T-cell (primary cell): ENCODE measurements at regions of chr7 and their contacts with region 1.

Region 1: GRCh38 chr7:144011458-144012230 is 11.5 kb downstream of the OR6B1 start:
- DNase-seq: no peak
- ATAC-seq: no peak
- H3K4me3 ChIP-seq: no peak overlapping the region
- H3K4me3 Mint-ChIP-seq: no peak overlapping the region
- H3K27ac ChIP-seq: no peak overlapping the region
- H3K27ac Mint-ChIP-seq: no peak overlapping the region
- H3K4me1 ChIP-seq: no peaks in the 10 kb centered on the region
- H3K4me1 Mint-ChIP-seq: no peaks in the 10 kb centered on the region
- H3K27me3 ChIP-seq: peaks cover 0 to 2% of the 10 kb centered on the region in 2 experiments
- H3K27me3 Mint-ChIP-seq: peaks cover 13 to 35% of the 10 kb centered on the region in 2 donors

Region 2: DNA sequence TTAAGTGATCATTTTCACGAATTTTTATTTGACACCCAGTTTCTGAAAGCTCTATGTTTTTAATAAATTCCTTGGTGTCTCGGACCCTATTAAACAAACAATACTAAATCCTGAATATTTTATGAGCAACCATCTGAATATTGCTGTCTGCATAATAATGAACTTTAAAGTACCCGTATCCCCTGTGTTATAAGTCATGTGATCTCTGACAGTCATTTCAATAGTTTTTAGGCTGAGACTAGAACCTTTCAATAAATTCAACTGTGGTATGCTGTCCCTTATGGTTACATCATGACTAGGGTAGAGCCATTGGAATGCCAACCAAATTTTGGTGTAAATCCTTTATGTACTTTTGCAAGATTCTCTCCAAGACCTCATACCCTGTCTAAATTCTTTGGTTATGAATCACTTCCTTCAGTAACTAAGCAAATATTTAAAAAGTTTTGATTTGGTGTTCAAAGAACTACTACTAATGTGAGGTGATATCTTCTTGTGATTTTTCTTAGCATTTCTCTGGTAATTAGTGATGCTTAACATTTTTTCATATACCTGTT is 32.4 kb before region 1 on chr7:
- CTCF ChIA-PET with region 1: no interaction called
- POLR2A ChIA-PET with region 1: no interaction called
- DNase-seq: no peak
- ATAC-seq: no peak
- H3K4me3 ChIP-seq: no peak overlapping the region
- H3K4me3 Mint-ChIP-seq: no peak overlapping the region
- H3K27ac ChIP-seq: no peak overlapping the region
- H3K27ac Mint-ChIP-seq: no peak overlapping the region
- H3K4me1 ChIP-seq: no peaks in the 10 kb centered on the region
- H3K4me1 Mint-ChIP-seq: no peaks in the 10 kb centered on the region
- H3K27me3 ChIP-seq: no peaks in the 10 kb centered on the region
- H3K27me3 Mint-ChIP-seq: peaks cover 5 to 9% of the 10 kb centered on the region in 2 donors

Region 3: DNA sequence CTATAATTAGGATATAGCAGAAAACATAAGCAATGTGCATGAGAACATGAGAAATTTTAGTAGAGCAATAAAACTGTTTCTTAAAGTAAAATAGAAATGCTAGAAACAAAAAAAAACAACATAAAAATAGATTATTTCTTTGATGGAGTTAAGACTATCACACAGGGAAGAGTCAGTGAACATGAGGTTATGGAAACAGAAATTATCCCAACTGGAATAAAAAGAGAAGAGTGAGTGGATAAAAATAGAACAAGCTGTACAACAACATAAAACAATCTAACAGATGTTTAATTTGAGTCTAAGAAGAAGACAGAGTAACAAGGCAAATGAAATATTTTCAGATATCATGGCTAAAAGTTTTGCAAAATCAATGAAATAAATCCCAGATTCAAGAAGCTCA is 19.0 kb before region 1 on chr7:
- CTCF ChIA-PET with region 1: no interaction called
- POLR2A ChIA-PET with region 1: interaction called in 1 of 2 experiments, 11 read pairs
- DNase-seq: no peak
- ATAC-seq: no peak
- H3K4me3 ChIP-seq: no peak overlapping the region
- H3K4me3 Mint-ChIP-seq: no peak overlapping the region
- H3K27ac ChIP-seq: no peak overlapping the region
- H3K27ac Mint-ChIP-seq: no peak overlapping the region
- H3K4me1 ChIP-seq: no peaks in the 10 kb centered on the region
- H3K4me1 Mint-ChIP-seq: peaks cover 0 to 1% (median 0%) of the 10 kb centered on the region in 3 donors
- H3K27me3 ChIP-seq: no peaks in the 10 kb centered on the region
- H3K27me3 Mint-ChIP-seq: peaks cover 6 to 13% of the 10 kb centered on the region in 2 donors

Region 4: GRCh38 chr7:144027070-144027469 is 15.4 kb after region 1 on chr7:
- CTCF ChIA-PET with region 1: no interaction called
- POLR2A ChIA-PET with region 1: no interaction called
- DNase-seq: peak in 1 of 35 experiments; percentile 2
- ATAC-seq: no peak
- H3K4me3 ChIP-seq: no peak overlapping the region
- H3K4me3 Mint-ChIP-seq: no peak overlapping the region
- H3K27ac ChIP-seq: no peak overlapping the region
- H3K27ac Mint-ChIP-seq: no peak overlapping the region
- H3K4me1 ChIP-seq: no peaks in the 10 kb centered on the region
- H3K4me1 Mint-ChIP-seq: no peaks in the 10 kb centered on the region
- H3K27me3 ChIP-seq: peaks cover 0 to 3% of the 10 kb centered on the region in 2 experiments
- H3K27me3 Mint-ChIP-seq: peaks cover 6 to 7% of the 10 kb centered on the region in 2 donors

Region 5: GRCh38 chr7:144063710-144064109 is 52.1 kb after region 1 on chr7:
- CTCF ChIA-PET with region 1: no interaction called
- POLR2A ChIA-PET with region 1: no interaction called
- DNase-seq: no peak
- ATAC-seq: no peak
- H3K4me3 ChIP-seq: no peak overlapping the region
- H3K4me3 Mint-ChIP-seq: no peak overlapping the region
- H3K27ac ChIP-seq: no peak overlapping the region
- H3K27ac Mint-ChIP-seq: no peak overlapping the region
- H3K4me1 ChIP-seq: no peaks in the 10 kb centered on the region
- H3K4me1 Mint-ChIP-seq: no peaks in the 10 kb centered on the region
- H3K27me3 ChIP-seq: peaks cover 0 to 3% of the 10 kb centered on the region in 2 experiments
- H3K27me3 Mint-ChIP-seq: peaks cover 23 to 42% of the 10 kb centered on the region in 2 donors

Region 6: DNA sequence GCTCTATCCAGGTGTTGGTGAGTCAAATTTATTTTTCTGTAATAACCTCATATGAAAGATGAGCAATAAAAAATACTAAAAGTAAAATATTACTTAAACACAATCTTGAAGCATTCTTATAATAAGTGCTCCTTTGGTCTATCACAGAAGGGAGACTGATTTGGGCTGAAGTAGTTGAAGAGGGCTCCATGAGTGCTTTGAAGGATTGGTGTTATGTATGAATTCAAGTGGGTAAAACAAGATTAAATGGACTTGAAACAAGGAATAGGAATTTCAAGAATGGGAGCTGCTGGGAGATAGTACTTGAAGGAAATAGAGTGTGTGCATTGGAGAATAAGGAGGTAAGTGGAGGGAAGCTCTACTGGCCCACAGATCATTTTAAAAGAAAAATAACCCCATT is 90.4 kb after region 1 on chr7:
- CTCF ChIA-PET with region 1: no interaction called
- POLR2A ChIA-PET with region 1: no interaction called
- DNase-seq: no peak
- ATAC-seq: no peak
- H3K4me3 ChIP-seq: no peak overlapping the region
- H3K4me3 Mint-ChIP-seq: no peak overlapping the region
- H3K27ac ChIP-seq: no peak overlapping the region
- H3K27ac Mint-ChIP-seq: no peak overlapping the region
- H3K4me1 ChIP-seq: peaks cover 0 to 9% of the 10 kb centered on the region in 2 experiments
- H3K4me1 Mint-ChIP-seq: peaks cover 7 to 13% (median 10%) of the 10 kb centered on the region in 3 donors
- H3K27me3 ChIP-seq: no peaks in the 10 kb centered on the region
- H3K27me3 Mint-ChIP-seq: peaks cover 0 to 6% of the 10 kb centered on the region in 2 donors